ENCODE measurements at regions of chr13 and their contacts with region 1.

Region 1: GRCh38 chr13:97999653-98000052 is 46.2 kb downstream of the IPO5 start:
- DNase-seq: no peak
- H3K4me3 ChIP-seq: no peak overlapping the region
- H3K27ac ChIP-seq: no peak overlapping the region
- H3K4me1 ChIP-seq: no peaks in the 10 kb centered on the region
- H3K27me3 ChIP-seq: no peaks in the 10 kb centered on the region
- CTCF ChIP-seq: no peak
- EP300 ChIP-seq: no peak
- POLR2A ChIP-seq: no peak
- RAD21 ChIP-seq: no peak

Region 2: GRCh38 chr13:97986835-97987234 is 12.8 kb before region 1 on chr13:
- CTCF ChIA-PET with region 1: interaction called, 4 read pairs
- POLR2A ChIA-PET with region 1: interaction called, 11 read pairs
- DNase-seq: no peak
- H3K4me3 ChIP-seq: no peak overlapping the region
- H3K27ac ChIP-seq: no peak overlapping the region
- H3K4me1 ChIP-seq: no peaks in the 10 kb centered on the region
- H3K27me3 ChIP-seq: no peaks in the 10 kb centered on the region
- CTCF ChIP-seq: no peak
- EP300 ChIP-seq: no peak
- POLR2A ChIP-seq: no peak
- RAD21 ChIP-seq: no peak

Measured in H1 (cell line).